Panc1 (cell line): ENCODE measurements at regions of chr20 and their contacts with region 1.

Region 1: GRCh38 chr20:47411161-47411560 is 54.7 kb upstream of the ZMYND8 start:
- DNase-seq: no peak
- ATAC-seq: no peak
- H3K4me3 ChIP-seq: no peak overlapping the region
- H3K27ac ChIP-seq: no peak overlapping the region
- H3K4me1 ChIP-seq: no peaks in the 10 kb centered on the region
- H3K27me3 ChIP-seq: no peaks in the 10 kb centered on the region
- CTCF ChIP-seq: no peak

Region 2: GRCh38 chr20:47290008-47290407 is 121.2 kb before region 1 on chr20:
- CTCF ChIA-PET with region 1: no interaction called
- POLR2A ChIA-PET with region 1: interaction called, 13 read pairs
- in situ Hi-C with region 1: no loop called
- intact Hi-C with region 1: no loop called
- DNase-seq: no peak
- ATAC-seq: no peak
- H3K4me3 ChIP-seq: no peak overlapping the region
- H3K27ac ChIP-seq: no peak overlapping the region; the same call in 1 of the 2 replicates
- H3K4me1 ChIP-seq: no peaks in the 10 kb centered on the region
- H3K27me3 ChIP-seq: no peaks in the 10 kb centered on the region
- CTCF ChIP-seq: no peak